ENCODE measurements at regions of chr10 and their contacts with region 1.

Region 1: GRCh38 chr10:73743905-73744663 is at the start of gene SEC24C:
- DNase-seq: peak; percentile 94
- ATAC-seq: peak; percentile 81
- H3K4me3 ChIP-seq: peak within 1 kb of the TSS; percentile 86
- H3K27ac ChIP-seq: peak within 1 kb of the TSS; percentile 95
- H3K4me1 ChIP-seq: peaks cover 2% of the 10 kb centered on the region; the same call in 1 of the 2 replicates
- H3K27me3 ChIP-seq: no peaks in the 10 kb centered on the region
- CTCF ChIP-seq: 0 out of 2 replicates have a peak, but pooled peaks have one; percentile 12
- POLR2A ChIP-seq: peak; percentile 96
- RAD21 ChIP-seq: no peak
- total RNA-seq, gene SEC24C: 66.4 and 74.2 TPM in 2 replicates

Region 2: DNA sequence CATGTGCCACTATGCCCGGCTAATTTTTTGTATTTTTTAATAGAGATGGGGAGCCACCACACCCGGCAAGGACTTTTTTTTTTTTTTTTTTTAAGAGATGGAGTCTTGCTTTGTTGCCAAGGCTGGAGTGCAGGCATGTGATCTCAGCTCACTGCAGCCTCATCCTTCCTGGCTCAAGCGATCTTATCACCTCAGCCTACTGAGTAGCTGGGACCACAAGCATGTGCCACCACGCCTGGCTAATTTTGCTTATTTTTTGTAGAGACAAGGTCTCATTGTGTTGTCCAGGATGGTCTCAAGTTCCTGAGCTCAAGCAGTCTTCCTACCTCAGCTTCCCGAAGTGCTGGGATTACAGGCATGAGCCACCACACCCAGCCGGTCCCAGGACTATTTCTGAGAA is 1061.5 kb before region 1 on chr10:
- CTCF ChIA-PET with region 1: no interaction called
- POLR2A ChIA-PET with region 1: no interaction called
- dilution Hi-C with region 1: no loop called
- in situ Hi-C with region 1: no loop called
- intact Hi-C with region 1: no loop called
- DNase-seq: no peak
- ATAC-seq: no peak
- H3K4me3 ChIP-seq: no peak overlapping the region
- H3K27ac ChIP-seq: no peak overlapping the region
- H3K4me1 ChIP-seq: no peaks in the 10 kb centered on the region
- H3K27me3 ChIP-seq: no peaks in the 10 kb centered on the region
- CTCF ChIP-seq: no peak
- POLR2A ChIP-seq: no peak
- RAD21 ChIP-seq: no peak

Region 3: DNA sequence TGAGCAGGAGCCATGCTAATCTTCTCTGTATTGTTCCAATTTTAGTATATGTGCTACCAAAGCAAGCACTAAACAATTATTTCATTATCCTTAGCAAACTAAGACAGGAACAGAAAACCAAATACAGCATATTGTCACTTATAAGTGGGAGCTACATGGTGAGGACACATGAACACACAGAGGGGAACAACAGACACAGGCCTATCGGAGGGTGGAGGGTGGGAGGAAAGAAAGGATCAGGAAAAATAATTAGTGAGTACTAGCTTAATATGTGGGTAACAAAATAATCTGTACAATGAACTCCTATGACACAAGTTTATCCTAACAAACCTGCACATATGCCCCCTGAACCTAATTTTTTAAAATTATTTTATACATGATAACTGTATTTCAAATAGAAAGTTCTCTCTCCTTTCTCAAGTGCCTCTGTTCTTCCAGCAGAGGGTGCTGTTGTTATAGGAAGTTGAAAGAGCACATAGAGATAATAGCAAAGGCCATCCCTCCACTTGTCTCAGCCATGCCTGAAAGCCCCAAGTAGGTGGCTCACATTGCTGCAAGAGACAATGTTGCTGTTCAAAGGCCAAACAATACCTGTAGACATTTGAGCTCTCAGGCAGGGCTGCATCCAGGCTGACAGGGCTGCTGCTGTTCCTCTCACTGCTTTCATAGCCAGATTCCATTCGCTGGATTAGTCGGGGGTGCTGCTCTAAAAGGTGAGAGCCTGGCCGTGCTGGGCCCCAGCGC is 214.8 kb before region 1 on chr10:
- CTCF ChIA-PET with region 1: no interaction called
- POLR2A ChIA-PET with region 1: no interaction called
- dilution Hi-C with region 1: no loop called
- in situ Hi-C with region 1: no loop called
- intact Hi-C with region 1: loop called (anchors 10 kb)
- DNase-seq: peak; percentile 81
- ATAC-seq: peak; percentile 96
- H3K4me3 ChIP-seq: no peak overlapping the region
- H3K27ac ChIP-seq: no peak overlapping the region
- H3K4me1 ChIP-seq: no peaks in the 10 kb centered on the region
- H3K27me3 ChIP-seq: no peaks in the 10 kb centered on the region
- CTCF ChIP-seq: peak; percentile 91
- POLR2A ChIP-seq: 0 out of 2 replicates have a peak, but pooled peaks have one; percentile 51
- RAD21 ChIP-seq: peak; percentile 95

Region 4: GRCh38 chr10:73772280-73773151 is 28.4 kb after region 1 on chr10:
- CTCF ChIA-PET with region 1: no interaction called
- POLR2A ChIA-PET with region 1: no interaction called
- dilution Hi-C with region 1: no loop called
- in situ Hi-C with region 1: no loop called
- intact Hi-C with region 1: loop called (anchors 1 kb)
- DNase-seq: peak; percentile 83
- ATAC-seq: peak; percentile 84
- H3K4me3 ChIP-seq: peak overlapping the region; percentile 72
- H3K27ac ChIP-seq: peak overlapping the region; percentile 91
- H3K4me1 ChIP-seq: peaks cover 7% of the 10 kb centered on the region
- H3K27me3 ChIP-seq: no peaks in the 10 kb centered on the region
- CTCF ChIP-seq: 0 out of 2 replicates have a peak, but pooled peaks have one; percentile 9
- POLR2A ChIP-seq: peak; percentile 61; the same call in 1 of the 2 replicates
- RAD21 ChIP-seq: no peak; the same call in 1 of the 2 replicates

Region 5: DNA sequence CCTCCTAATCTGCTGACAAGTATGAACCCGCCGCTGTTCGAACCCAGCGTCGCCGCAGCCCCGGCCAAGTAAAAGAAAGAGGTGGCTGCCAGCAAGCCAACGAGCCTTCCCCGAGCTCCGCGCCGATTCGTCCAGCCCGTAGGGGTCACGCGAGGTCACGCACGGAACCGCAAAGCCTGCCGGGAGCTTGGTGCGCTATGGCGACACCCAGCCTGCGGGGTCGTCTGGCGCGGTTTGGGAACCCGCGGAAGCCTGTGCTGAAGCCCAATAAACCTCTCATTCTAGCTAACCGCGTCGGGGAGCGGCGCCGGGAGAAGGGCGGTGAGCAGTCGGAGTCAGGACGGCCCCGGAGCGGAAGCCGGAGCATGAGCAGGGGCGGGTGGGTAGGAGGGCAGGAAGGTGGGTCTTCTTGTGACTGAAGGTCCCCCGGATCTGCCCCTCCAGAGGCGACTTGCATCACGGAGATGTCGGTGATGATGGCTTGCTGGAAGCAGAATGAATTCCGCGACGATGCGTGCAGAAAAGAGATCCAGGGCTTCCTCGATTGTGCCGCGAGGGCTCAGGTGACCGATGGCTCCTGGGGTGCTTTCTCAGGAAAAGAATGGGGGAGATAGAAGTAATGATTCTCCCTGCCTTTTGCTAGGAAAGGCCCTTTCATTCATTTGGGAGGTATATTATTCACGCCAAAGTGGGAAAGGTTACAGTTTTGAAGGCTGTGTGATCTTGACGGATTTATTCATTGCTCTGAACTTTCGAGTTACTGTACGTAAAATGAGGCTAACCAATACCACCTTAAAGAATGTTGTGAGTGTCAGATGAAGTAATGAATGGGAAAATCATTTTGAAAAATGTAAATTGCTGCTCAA is 38.0 kb after region 1 on chr10 and contains the start of gene CHCHD1:
- CTCF ChIA-PET with region 1: no interaction called
- POLR2A ChIA-PET with region 1: interaction called, 4 read pairs
- dilution Hi-C with region 1: no loop called
- in situ Hi-C with region 1: no loop called
- intact Hi-C with region 1: loop called (anchors 2 kb)
- DNase-seq: peak; percentile 85
- ATAC-seq: peak; percentile 74
- H3K4me3 ChIP-seq: peak within 1 kb of the TSS; percentile 92
- H3K27ac ChIP-seq: peak within 1 kb of the TSS; percentile 90
- H3K4me1 ChIP-seq: peaks cover 5% of the 10 kb centered on the region; the same call in 1 of the 2 replicates
- H3K27me3 ChIP-seq: no peaks in the 10 kb centered on the region
- CTCF ChIP-seq: no peak
- POLR2A ChIP-seq: no peak; the same call in 1 of the 2 replicates
- RAD21 ChIP-seq: no peak
- total RNA-seq, gene CHCHD1: 11.5 and 13.9 TPM in 2 replicates

Region 6: GRCh38 chr10:74176380-74177139 is 432.5 kb after region 1 on chr10:
- CTCF ChIA-PET with region 1: no interaction called
- POLR2A ChIA-PET with region 1: no interaction called
- dilution Hi-C with region 1: no loop called
- in situ Hi-C with region 1: no loop called
- intact Hi-C with region 1: no loop called
- DNase-seq: peak; percentile 92
- ATAC-seq: peak; percentile 99
- H3K4me3 ChIP-seq: peak overlapping the region; percentile 82
- H3K27ac ChIP-seq: peak overlapping the region; percentile 40
- H3K4me1 ChIP-seq: no peaks in the 10 kb centered on the region; the same call in 1 of the 2 replicates
- H3K27me3 ChIP-seq: no peaks in the 10 kb centered on the region
- CTCF ChIP-seq: no peak
- POLR2A ChIP-seq: peak; percentile 98
- RAD21 ChIP-seq: no peak